Aorta (tissue), 5 donors: ENCODE measurements at regions of chr20 and their contacts with region 1.

Region 1: GRCh38 chr20:38221119-38221589 is 39.4 kb downstream of the KIAA1755 start:
- DNase-seq: peak; percentile 76 to 93
- ATAC-seq: peak; percentile 83
- H3K4me3 ChIP-seq: no peak overlapping the region
- H3K27ac ChIP-seq: no peak overlapping the region
- H3K4me1 ChIP-seq: no peaks in the 10 kb centered on the region
- H3K27me3 ChIP-seq: no peaks in the 10 kb centered on the region

Region 2: DNA sequence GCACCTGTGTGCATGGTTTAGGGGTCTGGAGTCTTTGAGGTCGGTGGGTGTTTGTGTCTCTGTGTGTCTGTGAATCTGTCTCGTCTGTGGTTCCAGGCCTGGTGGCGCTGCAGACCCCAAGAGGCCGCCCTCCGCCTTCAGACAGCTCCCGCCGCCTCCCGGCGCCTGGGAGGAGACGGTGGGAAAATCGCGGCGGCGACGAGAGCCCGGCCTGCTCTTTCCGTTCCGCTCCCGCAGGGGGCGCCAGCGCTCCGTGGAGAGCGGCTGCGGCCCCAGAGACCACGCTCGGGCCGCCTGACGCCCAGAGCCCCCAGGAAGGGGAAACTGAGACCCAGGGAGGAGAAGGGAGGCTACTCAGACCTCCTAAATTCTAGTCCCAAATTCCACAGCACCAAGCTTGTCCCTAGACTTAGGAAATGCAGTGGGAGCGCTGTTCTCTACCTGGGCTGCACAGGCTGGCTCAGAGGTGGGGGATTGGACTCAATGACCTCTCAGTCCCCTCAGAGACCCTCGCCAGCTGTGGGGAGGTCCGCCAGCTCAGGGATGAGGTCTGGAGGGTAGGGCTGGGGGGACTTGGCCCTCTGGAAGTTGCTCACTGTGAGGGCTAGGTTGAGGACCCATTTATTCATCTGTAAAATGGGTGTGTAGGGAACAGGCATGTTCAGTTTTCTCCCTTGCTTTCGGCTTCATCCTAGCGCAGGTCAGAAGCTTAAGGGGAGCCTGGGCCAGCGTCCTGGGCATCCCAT is 656.6 kb before region 1 on chr20:
- intact Hi-C with region 1: loop called in 1 of 2 experiments (anchors 5 kb)
- DNase-seq: peak in 1 of 2 donors; percentile 88
- ATAC-seq: peak; percentile 71
- H3K4me3 ChIP-seq: no peak overlapping the region
- H3K27ac ChIP-seq: no peak overlapping the region
- H3K4me1 ChIP-seq: no peaks in the 10 kb centered on the region
- H3K27me3 ChIP-seq: no peaks in the 10 kb centered on the region

Region 3: DNA sequence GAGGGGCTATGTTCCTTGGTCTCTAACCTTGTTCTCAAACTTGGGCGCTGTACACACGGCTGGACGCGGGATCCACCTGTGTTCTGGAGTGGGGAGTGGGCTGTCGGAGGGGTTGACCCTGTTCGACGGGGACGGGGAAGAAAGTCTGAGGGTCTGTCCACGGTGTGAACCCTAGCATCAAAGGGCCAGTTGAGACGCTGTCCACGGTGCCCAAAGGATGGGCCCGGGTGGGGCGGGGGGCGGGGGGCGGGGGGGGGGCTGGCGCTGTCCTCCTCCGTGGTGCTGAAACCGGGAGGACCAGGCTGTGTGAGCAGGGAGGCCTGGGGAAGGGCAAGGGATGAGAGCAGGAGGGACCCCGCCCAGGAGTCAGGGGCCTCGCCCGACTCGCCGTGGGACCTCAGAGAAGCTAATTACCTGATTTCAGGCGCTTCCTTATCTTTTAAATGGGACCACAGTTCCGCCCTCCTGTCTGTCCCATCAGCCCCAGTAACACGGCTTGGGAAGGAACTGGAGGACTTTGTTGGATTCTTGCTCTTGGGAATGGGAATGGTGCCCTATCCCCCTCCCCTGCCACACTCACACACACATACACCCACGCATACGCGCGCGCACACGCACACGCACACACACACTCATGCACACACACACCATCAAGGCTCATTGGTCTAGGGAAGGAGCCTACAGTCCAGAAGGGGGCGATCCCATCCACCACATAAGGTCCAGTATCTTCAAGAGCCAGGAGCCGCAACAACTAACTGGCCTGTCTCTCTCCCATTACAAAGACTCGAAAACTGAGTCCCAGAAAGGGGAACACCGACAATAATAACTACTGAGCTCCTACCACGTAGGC is 319.3 kb before region 1 on chr20:
- intact Hi-C with region 1: loop called in 1 of 2 experiments (anchors 10 kb)
- DNase-seq: no peak
- ATAC-seq: peak; percentile 62
- H3K4me3 ChIP-seq: no peak overlapping the region
- H3K27ac ChIP-seq: no peak overlapping the region
- H3K4me1 ChIP-seq: no peaks in the 10 kb centered on the region
- H3K27me3 ChIP-seq: no peaks in the 10 kb centered on the region

Region 4: GRCh38 chr20:38057351-38057972 is 163.7 kb before region 1 on chr20:
- intact Hi-C with region 1: loop called (anchors 1 to 2 kb)
- DNase-seq: peak; percentile 88 to 95
- ATAC-seq: peak; percentile 85
- H3K4me3 ChIP-seq: no peak overlapping the region
- H3K27ac ChIP-seq: no peak overlapping the region
- H3K4me1 ChIP-seq: no peaks in the 10 kb centered on the region
- H3K27me3 ChIP-seq: no peaks in the 10 kb centered on the region

Region 5: GRCh38 chr20:38165089-38165989 is 55.8 kb before region 1 on chr20 and contains the start of gene TGM2:
- intact Hi-C with region 1: loop called (anchors 2 to 5 kb)
- DNase-seq: peak; percentile 89 to 96
- ATAC-seq: peak; percentile 89
- H3K4me3 ChIP-seq: peak within 1 kb of the TSS; percentile 35 to 38
- H3K27ac ChIP-seq: peak within 1 kb of the TSS in 1 of 2 donors; percentile 71
- H3K4me1 ChIP-seq: peaks cover 0 to 1% of the 10 kb centered on the region in 2 donors
- H3K27me3 ChIP-seq: no peaks in the 10 kb centered on the region
- total RNA-seq, gene TGM2: 449 to 561 TPM

Region 6: GRCh38 chr20:38270869-38271605 is 49.9 kb after region 1 on chr20:
- intact Hi-C with region 1: no loop called
- DNase-seq: peak; percentile 89 to 90
- ATAC-seq: peak; percentile 93
- H3K4me3 ChIP-seq: no peak overlapping the region
- H3K27ac ChIP-seq: peak overlapping the region in 1 of 2 donors; percentile 39
- H3K4me1 ChIP-seq: peaks cover 7 to 15% of the 10 kb centered on the region in 2 donors
- H3K27me3 ChIP-seq: no peaks in the 10 kb centered on the region

Region 7: GRCh38 chr20:38406476-38406875 is 185.3 kb after region 1 on chr20:
- intact Hi-C with region 1: loop called in 1 of 2 experiments (anchors 10 kb)
- DNase-seq: no peak
- ATAC-seq: no peak
- H3K4me3 ChIP-seq: no peak overlapping the region
- H3K27ac ChIP-seq: no peak overlapping the region
- H3K4me1 ChIP-seq: no peaks in the 10 kb centered on the region
- H3K27me3 ChIP-seq: no peaks in the 10 kb centered on the region